ENCODE measurements at regions of chr6 and their contacts with region 1.

Region 1: DNA sequence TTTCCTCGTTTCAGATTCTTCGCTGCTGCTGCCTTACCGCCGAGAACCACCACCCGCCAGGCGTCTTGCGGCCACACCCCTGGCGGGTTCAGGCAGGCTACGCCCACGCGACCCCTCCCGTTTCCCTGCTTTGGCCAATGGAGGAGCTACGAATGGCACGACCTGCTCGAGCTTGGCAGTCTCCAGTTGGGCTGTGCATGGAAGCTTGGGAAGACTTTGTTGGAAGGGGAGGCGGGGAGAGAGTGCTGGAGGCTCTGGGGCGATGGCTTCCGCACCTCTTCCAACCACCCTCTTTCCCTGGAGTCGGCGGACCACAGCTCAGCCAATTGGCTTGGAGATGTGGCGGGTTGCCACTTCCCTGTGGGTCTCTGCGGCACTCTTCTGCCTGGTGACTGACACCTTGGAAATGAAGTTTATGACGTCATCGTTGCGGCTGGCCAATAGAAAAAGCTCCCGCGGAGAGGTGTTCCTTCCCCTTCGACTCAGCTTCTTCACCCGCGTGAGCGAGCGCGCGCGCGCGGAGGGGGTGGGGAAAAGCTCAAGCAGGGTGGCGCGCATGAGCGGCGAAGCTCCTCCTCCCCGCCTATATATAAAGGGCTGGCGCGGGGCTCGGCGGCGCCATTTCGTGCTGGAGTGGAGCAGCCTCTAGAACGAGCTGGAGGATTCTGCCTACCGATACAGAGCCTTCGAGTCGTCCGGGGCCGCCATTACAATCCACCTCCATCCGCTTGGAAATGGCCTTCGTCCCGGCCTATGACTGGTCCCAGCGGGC is 3.4 kb downstream of the BRD2 start:
- DNase-seq: peak; percentile 98
- ATAC-seq: peak; percentile 43
- H3K4me3 ChIP-seq: peak overlapping the region; percentile 90 to 98 (median 95)
- H3K27ac ChIP-seq: peak overlapping the region; percentile 99
- H3K4me1 ChIP-seq: peaks cover 47% of the 10 kb centered on the region
- H3K27me3 ChIP-seq: peaks cover 0 to 4% of the 10 kb centered on the region in 2 experiments; a peak in 1 of 5 replicates
- CTCF ChIP-seq: 0 out of 2 replicates have a peak, but pooled peaks have one; percentile 17
- EP300 ChIP-seq: peak; percentile 17 to 45; a peak in 2 of 4 replicates
- POLR2A ChIP-seq: peak in 1 of 2 experiments; percentile 100; a peak in 2 of 4 replicates
- RAD21 ChIP-seq: peak; percentile 62

Region 2: GRCh38 chr6:32190054-32190851 is 781.5 kb before region 1 on chr6 and contains the start of gene PBX2:
- CTCF ChIA-PET with region 1: no interaction called
- POLR2A ChIA-PET with region 1: interaction called, 28 read pairs
- in situ Hi-C with region 1: loop called (anchors 5 kb)
- intact Hi-C with region 1: no loop called
- DNase-seq: peak; percentile 87
- ATAC-seq: peak; percentile 76
- H3K4me3 ChIP-seq: peak within 1 kb of the TSS; percentile 74 to 93 (median 79)
- H3K27ac ChIP-seq: peak within 1 kb of the TSS; percentile 80
- H3K4me1 ChIP-seq: peaks cover 46% of the 10 kb centered on the region
- H3K27me3 ChIP-seq: no peaks in the 10 kb centered on the region; a peak in 1 of 5 replicates
- CTCF ChIP-seq: peak; percentile 27; the same call in 1 of the 2 replicates
- EP300 ChIP-seq: 0 out of 4 replicates have a peak, but pooled peaks of 1 of the 2 experiments have one; percentile 23
- POLR2A ChIP-seq: peak in 1 of 2 experiments; percentile 45; a peak in 1 of 4 replicates
- RAD21 ChIP-seq: no peak
- total RNA-seq, gene PBX2: 42.3 and 45.2 TPM in 2 replicates

Region 3: GRCh38 chr6:32539839-32540238 is 431.9 kb before region 1 on chr6:
- CTCF ChIA-PET with region 1: no interaction called
- POLR2A ChIA-PET with region 1: no interaction called
- in situ Hi-C with region 1: no loop called
- intact Hi-C with region 1: no loop called
- DNase-seq: no peak
- ATAC-seq: no peak
- H3K4me3 ChIP-seq: no peak overlapping the region
- H3K27ac ChIP-seq: no peak overlapping the region
- H3K4me1 ChIP-seq: no peaks in the 10 kb centered on the region
- H3K27me3 ChIP-seq: no peaks in the 10 kb centered on the region
- CTCF ChIP-seq: no peak
- EP300 ChIP-seq: no peak
- POLR2A ChIP-seq: no peak
- RAD21 ChIP-seq: no peak

Region 4: DNA sequence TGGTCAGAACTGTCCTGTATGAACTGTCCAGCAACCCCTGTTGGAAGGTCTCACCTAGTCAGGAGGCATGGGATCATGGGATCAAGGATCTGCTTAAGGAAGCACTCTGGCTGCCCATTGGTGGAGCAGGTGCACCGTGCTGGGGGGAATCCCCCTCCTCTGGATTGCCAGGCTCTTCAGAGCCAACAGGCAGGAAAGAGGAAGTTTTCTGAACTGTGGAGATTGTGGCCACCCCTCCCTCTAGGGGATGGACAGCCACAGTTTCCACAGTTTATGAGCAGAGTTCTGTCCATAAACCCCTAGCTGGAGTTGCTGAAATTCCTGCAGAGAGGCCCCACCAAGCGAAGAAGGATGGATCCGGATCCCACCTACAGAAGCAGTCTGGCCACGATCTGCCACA is 292.3 kb before region 1 on chr6:
- CTCF ChIA-PET with region 1: no interaction called
- POLR2A ChIA-PET with region 1: no interaction called
- in situ Hi-C with region 1: no loop called
- intact Hi-C with region 1: no loop called
- DNase-seq: no peak
- ATAC-seq: no peak
- H3K4me3 ChIP-seq: no peak overlapping the region
- H3K27ac ChIP-seq: no peak overlapping the region
- H3K4me1 ChIP-seq: no peaks in the 10 kb centered on the region
- H3K27me3 ChIP-seq: no peaks in the 10 kb centered on the region
- CTCF ChIP-seq: no peak
- EP300 ChIP-seq: no peak
- POLR2A ChIP-seq: no peak
- RAD21 ChIP-seq: no peak

Region 5: DNA sequence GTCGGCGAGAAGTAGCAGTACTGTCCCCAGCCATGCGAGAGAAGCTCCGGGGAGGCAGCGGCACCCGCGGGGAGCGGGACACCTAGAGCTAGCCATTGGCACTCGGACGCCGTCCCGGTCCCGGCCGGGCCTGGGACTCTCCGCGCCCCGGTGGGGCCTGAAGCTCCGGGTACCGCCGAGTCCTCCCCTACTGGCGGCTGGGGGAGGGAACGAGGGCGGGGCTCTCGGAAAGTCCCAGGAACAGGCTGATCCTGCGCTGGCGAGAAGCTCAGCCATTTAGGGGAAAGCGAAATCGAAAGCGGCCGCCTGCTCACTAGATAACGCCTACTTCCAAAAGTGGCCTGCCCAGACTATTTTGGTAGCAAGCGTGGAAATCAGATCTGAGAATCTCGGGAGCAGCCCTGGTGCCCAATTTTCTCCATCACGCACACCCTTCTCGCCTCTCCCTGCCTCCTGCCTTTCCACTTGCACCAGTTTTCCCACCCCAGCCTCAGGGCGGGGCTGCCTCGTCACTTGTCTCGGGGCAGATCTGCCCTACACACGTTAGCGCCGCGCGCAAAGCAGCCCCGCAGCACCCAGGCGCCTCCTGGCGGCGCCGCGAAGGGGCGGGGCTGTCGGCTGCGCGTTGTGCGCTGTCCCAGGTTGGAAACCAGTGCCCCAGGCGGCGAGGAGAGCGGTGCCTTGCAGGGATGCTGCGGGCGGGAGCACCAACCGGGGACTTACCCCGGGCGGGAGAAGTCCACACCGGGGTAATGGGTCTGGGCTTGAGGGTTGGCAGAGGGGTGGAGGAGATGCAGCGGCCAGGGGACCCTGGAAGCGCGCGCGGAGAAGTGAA is 118.0 kb before region 1 on chr6 and contains the starts of genes PSMB9 and TAP1:
- CTCF ChIA-PET with region 1: no interaction called
- POLR2A ChIA-PET with region 1: interaction called, 69 read pairs
- in situ Hi-C with region 1: no loop called
- intact Hi-C with region 1: no loop called
- DNase-seq: peak; percentile 88
- ATAC-seq: peak; percentile 89
- H3K4me3 ChIP-seq: peak within 1 kb of the TSS; percentile 93 to 96 (median 95)
- H3K27ac ChIP-seq: peak within 1 kb of the TSS; percentile 62
- H3K4me1 ChIP-seq: peaks cover 26% of the 10 kb centered on the region
- H3K27me3 ChIP-seq: no peaks in the 10 kb centered on the region; a peak in 1 of 5 replicates
- CTCF ChIP-seq: peak; percentile 97
- EP300 ChIP-seq: peak in 1 of 2 experiments; percentile 2; a peak in 1 of 4 replicates
- POLR2A ChIP-seq: peak; percentile 61 to 80
- RAD21 ChIP-seq: peak; percentile 94
- total RNA-seq, gene PSMB9: 16.0 and 21.4 TPM in 2 replicates
- total RNA-seq, gene TAP1: 23.0 and 52.2 TPM in 2 replicates

Region 6: DNA sequence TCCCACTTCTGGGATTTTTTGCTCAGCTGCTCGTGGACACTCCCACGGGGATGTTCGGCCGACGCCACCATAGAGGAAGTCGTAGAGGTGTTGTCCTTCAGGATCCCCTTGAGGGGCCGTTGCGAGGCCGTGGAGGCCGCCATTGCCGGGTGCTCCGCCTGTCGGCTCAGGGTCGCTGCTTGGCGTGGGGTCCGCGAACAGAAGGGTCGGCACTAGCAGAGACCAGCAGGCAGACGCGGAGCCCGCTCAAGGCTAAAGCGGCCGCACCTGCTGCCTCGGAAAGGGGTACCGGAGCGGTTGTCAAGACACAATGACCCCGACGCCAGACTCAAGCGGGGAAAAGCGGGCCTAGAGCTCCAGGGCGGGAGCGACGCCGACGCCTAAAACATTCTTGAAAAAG is 92.1 kb before region 1 on chr6:
- CTCF ChIA-PET with region 1: no interaction called
- POLR2A ChIA-PET with region 1: no interaction called
- in situ Hi-C with region 1: no loop called
- intact Hi-C with region 1: no loop called
- DNase-seq: no peak
- ATAC-seq: no peak
- H3K4me3 ChIP-seq: no peak overlapping the region
- H3K27ac ChIP-seq: no peak overlapping the region
- H3K4me1 ChIP-seq: no peaks in the 10 kb centered on the region
- H3K27me3 ChIP-seq: peaks cover 0 to 21% of the 10 kb centered on the region in 2 experiments; a peak in 1 of 5 replicates
- CTCF ChIP-seq: no peak
- EP300 ChIP-seq: no peak
- POLR2A ChIP-seq: no peak
- RAD21 ChIP-seq: no peak

Region 7: GRCh38 chr6:32947552-32948465 is 24.0 kb before region 1 on chr6:
- CTCF ChIA-PET with region 1: interaction called, 3 read pairs
- POLR2A ChIA-PET with region 1: interaction called, 202 read pairs
- in situ Hi-C with region 1: no loop called
- intact Hi-C with region 1: no loop called
- DNase-seq: peak; percentile 58
- ATAC-seq: peak; percentile 83
- H3K4me3 ChIP-seq: no peak overlapping the region
- H3K27ac ChIP-seq: no peak overlapping the region
- H3K4me1 ChIP-seq: peaks cover 3% of the 10 kb centered on the region; the same call in 1 of the 2 replicates
- H3K27me3 ChIP-seq: peaks cover 3 to 13% of the 10 kb centered on the region in 2 experiments; a peak in 2 of 5 replicates
- CTCF ChIP-seq: peak; percentile 91
- EP300 ChIP-seq: no peak
- POLR2A ChIP-seq: no peak
- RAD21 ChIP-seq: peak; percentile 82

Region 8: DNA sequence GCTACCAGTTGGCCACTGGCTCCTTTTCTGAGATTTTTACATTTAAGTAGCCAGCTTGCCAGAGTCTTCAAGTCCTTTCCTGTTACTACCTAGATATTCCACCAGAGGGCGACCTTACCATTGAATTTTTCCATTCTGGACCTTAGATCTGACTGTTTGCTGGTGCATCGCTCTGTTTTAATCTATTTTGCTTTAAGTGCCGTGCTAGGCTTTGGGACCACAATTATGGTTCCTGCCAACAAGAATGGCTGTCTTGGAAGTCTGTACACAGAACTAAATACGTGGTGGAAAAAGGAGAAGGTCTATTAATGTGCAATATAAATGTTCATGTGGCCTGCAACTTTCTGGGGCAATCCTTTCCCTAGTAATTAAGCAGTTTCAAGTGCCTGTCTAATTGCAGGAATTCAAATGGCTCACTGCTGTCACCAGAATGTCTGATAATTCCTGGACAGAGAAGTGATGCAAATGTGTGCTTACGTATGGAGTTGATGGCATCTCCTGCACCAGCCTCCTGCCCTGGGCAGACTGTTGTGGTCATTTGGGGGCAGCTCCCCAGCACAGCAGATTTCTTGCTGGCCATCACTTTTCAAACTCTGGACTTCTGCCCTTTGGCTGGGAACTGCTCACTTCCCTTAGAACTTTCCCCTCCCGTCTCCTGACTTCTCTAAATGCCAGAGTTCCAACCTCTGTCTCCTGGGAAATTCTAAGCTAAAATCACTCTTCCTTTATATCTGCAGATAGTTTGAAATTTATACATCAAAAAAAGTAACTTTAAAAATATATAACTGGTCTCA is 43.3 kb after region 1 on chr6:
- CTCF ChIA-PET with region 1: no interaction called
- POLR2A ChIA-PET with region 1: no interaction called
- in situ Hi-C with region 1: no loop called
- intact Hi-C with region 1: no loop called
- DNase-seq: peak; percentile 77
- ATAC-seq: peak; percentile 78
- H3K4me3 ChIP-seq: no peak overlapping the region
- H3K27ac ChIP-seq: no peak overlapping the region
- H3K4me1 ChIP-seq: no peaks in the 10 kb centered on the region
- H3K27me3 ChIP-seq: peaks cover 3 to 46% of the 10 kb centered on the region in 2 experiments; a peak in 3 of 5 replicates
- CTCF ChIP-seq: peak; percentile 80
- EP300 ChIP-seq: no peak
- POLR2A ChIP-seq: no peak
- RAD21 ChIP-seq: peak; percentile 65; the same call in 1 of the 2 replicates

Region 9: DNA sequence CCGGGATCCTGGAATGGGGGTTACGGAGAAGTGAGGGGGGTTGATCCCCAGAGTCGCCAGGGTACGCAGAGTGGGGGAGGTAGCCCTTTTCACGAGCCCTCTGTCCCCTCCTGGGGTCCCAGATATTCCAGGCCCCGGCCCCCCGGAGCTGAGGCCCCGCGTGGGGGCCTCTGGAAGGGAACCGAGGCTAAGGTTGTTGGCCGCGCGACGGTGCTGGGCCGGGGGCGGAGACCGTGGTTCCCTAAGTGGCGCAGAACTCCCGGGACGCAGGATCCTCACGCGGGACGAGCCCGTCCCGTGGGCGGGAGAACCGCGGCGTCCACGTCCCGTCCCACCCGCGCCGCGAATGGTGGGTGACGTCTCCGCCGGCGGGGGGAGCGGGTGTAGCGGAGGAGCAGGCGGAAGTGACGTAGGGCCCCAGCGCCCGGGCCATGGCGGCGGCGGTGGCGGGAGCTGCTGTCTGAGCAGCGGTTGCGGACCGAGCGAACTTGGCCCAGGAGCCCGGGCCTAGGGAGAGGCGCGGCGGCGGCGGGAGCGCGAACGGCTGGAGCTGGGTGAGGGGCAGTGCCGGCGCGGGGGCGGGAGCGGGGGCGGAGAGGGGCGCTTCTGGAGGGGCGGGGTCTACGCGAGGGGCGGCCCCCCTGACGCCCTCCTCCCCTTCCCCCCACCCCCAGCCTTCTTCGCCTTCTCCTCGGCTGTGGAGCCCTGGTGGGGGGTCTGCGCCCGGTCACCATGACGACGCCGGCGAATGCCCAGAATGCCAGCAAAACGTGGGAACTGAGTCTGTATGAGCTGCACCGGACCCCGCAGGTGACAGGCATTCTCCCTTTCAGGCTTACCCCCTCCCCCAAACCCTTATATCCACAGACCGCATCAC is 236.6 kb after region 1 on chr6 and contains the start of gene RING1:
- CTCF ChIA-PET with region 1: no interaction called
- POLR2A ChIA-PET with region 1: interaction called, 12 read pairs
- in situ Hi-C with region 1: no loop called
- intact Hi-C with region 1: no loop called
- DNase-seq: peak; percentile 59
- ATAC-seq: peak; percentile 30
- H3K4me3 ChIP-seq: peak within 1 kb of the TSS; percentile 90 to 93 (median 91)
- H3K27ac ChIP-seq: peak within 1 kb of the TSS; percentile 76
- H3K4me1 ChIP-seq: peaks cover 58% of the 10 kb centered on the region
- H3K27me3 ChIP-seq: peaks cover 0 to 1% of the 10 kb centered on the region in 2 experiments; a peak in 1 of 5 replicates
- CTCF ChIP-seq: peak; percentile 18; the same call in 1 of the 2 replicates
- EP300 ChIP-seq: no peak
- POLR2A ChIP-seq: peak in 1 of 2 experiments; percentile 78; a peak in 2 of 4 replicates
- RAD21 ChIP-seq: peak; percentile 44; the same call in 1 of the 2 replicates
- total RNA-seq, gene RING1: 19.8 and 23.9 TPM in 2 replicates

Region 10: DNA sequence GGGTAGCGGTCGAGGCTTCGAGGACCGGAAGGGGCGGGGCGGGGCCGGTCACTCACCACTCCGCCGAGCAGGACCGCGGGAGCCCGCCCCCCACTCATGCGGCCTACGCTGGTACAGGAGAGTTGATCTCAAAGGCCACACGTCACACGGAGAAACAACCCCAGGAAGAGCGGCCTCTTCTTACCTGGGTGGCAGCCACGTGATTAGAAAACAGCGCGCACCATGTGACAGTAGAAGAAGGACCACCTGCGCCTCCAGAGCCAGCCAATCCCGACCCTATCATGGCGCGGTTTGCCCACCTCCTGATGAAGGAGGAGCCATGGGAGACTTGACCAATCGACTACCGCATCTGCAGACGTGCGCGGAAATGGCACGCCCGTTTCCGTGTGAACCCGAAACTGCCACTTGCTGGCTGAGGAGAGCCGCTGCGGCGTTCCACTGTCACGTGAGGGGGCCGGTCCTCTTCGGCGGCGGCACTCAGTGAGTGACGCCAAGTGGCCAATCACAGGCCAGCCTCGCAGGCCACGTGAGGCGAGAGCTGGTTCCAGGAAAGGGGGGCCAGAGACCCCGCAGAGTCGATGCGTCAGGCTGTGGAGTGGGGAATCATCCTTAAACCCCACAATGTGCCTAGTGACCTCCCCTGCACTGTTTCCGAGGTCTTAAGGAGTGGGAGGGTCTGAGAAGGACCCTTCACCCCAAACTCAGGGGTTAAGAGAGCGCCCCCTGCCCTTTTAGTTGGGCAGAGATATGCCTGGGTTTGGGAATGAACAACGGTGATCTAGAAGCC is 446.3 kb after region 1 on chr6 and contains the start of gene CUTA:
- CTCF ChIA-PET with region 1: no interaction called
- POLR2A ChIA-PET with region 1: interaction called, 11 read pairs
- in situ Hi-C with region 1: no loop called
- intact Hi-C with region 1: no loop called
- DNase-seq: peak; percentile 100
- ATAC-seq: peak; percentile 94
- H3K4me3 ChIP-seq: peak within 1 kb of the TSS; percentile 68 to 96 (median 82)
- H3K27ac ChIP-seq: peak within 1 kb of the TSS; percentile 82
- H3K4me1 ChIP-seq: peaks cover 42% of the 10 kb centered on the region
- H3K27me3 ChIP-seq: peaks cover 2 to 21% of the 10 kb centered on the region in 2 experiments; a peak in 3 of 5 replicates
- CTCF ChIP-seq: peak; percentile 76
- EP300 ChIP-seq: peak in 1 of 2 experiments; percentile 6; a peak in 1 of 4 replicates
- POLR2A ChIP-seq: peak in 1 of 2 experiments; percentile 78; a peak in 2 of 4 replicates
- RAD21 ChIP-seq: no peak
- total RNA-seq, gene CUTA: 106 and 180 TPM in 2 replicates

Measured in HepG2 (cell line).